CD8-positive, alpha-beta T cell (primary cell): ENCODE measurements at regions of chr11 and their contacts with region 1.

Region 1: DNA sequence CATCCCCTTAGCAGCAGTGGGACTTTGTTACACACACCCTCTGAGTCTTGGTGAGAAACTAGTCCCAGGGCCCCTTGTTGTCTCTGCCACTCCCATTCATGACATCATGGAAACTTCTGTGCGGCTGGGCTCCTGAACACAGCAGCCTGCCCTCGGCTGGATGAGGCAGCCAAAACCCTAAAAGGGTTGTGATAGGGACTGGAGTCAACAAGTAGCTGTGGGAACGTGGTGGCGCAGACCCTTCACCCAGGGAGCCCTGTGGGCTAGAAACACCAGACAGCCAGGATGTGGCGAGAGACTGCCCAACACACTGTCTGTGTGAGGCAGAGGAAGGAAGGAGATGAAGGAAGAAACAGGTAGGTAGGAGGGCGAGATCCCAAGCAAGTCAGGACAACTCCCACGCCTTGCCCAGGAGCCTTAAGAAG is 3.9 kb downstream of the CD3D start:
- DNase-seq: peak; percentile 67 to 97 (median 91)
- ATAC-seq: peak; percentile 63
- H3K4me3 ChIP-seq: peak overlapping the region; percentile 87 to 92
- H3K4me3 Mint-ChIP-seq: peak overlapping the region; percentile 93
- H3K27ac ChIP-seq: peak overlapping the region; percentile 72 to 94
- H3K27ac Mint-ChIP-seq: peak overlapping the region; percentile 99
- H3K4me1 ChIP-seq: peaks cover 64% of the 10 kb centered on the region
- H3K4me1 Mint-ChIP-seq: peaks cover 74% of the 10 kb centered on the region
- H3K27me3 ChIP-seq: no peaks in the 10 kb centered on the region
- H3K27me3 Mint-ChIP-seq: no peaks in the 10 kb centered on the region
- CTCF ChIP-seq: no peak

Region 2: DNA sequence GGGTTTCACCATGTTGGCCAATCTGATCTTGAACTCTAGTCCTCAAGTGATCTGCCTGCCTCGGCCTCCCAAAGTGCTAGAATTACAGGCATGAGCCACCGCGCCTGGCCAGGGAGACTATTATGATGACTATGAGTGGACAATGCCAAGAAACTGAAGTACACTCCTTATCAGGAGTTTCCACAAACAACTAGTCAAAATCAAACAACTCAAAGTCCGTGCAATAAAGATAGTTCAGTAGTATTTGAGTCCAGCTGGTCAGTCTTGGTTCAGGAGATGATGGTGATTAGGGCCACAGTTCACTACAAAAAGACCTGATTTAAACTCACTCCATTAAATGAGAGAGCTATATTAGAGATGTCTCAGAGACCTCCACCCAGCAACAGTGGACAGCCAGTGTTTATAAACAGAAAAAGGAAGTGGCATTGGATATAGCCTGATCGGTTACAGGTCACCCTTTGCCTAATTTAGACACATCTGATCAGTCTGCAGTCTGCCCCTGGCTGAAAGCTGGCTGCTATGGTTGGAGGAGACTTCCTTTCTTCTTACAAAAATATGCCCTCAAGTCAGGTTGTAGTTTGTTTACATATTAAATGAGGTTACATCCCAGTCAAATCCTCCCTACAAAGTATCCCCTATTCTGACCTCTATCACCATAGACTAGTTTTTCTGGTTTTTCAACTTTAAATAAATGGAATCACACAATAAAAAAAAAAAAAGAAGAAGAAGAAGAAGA is 17.1 kb before region 1 on chr11:
- CTCF ChIA-PET with region 1: interaction called, 6 read pairs
- POLR2A ChIA-PET with region 1: interaction called, 20 read pairs
- intact Hi-C with region 1: no loop called
- DNase-seq: no peak
- ATAC-seq: no peak
- H3K4me3 ChIP-seq: no peak overlapping the region
- H3K4me3 Mint-ChIP-seq: no peak overlapping the region
- H3K27ac ChIP-seq: no peak overlapping the region
- H3K27ac Mint-ChIP-seq: peak overlapping the region; percentile 62
- H3K4me1 ChIP-seq: peaks cover 53% of the 10 kb centered on the region
- H3K4me1 Mint-ChIP-seq: peaks cover 77% of the 10 kb centered on the region
- H3K27me3 ChIP-seq: no peaks in the 10 kb centered on the region
- H3K27me3 Mint-ChIP-seq: no peaks in the 10 kb centered on the region
- CTCF ChIP-seq: no peak